Activated naive CD4-positive, alpha-beta T cell treated with anti-CD3 and anti-CD28 coated beads for 36 hours (primary cell): ENCODE measurements at regions of chr12 and their contacts with region 1.

Region 1: DNA sequence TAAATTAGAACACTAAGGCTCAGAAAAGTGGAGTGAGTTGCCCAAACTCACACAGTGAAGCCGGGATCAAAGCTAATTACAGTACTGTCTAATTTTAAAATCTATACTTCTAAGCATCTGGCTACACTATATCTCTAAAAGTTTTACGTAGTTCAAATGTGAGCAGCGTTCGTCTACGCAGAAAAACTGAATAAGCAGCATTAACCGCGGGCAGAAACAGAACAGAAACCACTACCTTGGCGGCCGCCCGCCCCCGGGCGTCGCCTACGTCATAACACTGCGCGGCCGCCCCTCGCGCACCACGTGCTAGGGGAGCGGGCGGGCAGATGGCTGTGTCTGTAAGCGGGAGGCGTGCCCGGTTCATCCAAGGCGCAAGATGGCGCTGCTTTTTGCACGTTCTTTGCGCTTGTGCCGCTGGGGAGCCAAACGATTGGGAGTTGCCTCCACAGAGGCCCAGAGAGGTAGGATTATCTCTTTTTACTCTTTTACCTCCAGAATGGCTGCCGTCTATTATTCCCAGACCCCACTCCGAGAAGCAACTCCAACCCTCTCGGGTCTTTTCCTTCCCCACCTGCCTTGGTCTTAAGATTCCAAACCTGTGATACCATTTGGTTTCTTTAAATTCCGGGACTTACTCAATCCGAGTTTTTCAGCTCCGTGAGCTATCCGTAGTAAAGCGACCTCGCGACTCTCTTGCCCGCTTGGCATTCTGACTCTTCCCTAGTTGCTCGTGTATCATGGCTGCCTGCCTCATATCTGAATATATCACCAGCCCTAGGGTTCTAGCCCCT is at the start of gene SPRYD4:
- DNase-seq: peak; percentile 95
- H3K4me3 Mint-ChIP-seq: peak within 1 kb of the TSS; percentile 96
- H3K27ac Mint-ChIP-seq: peak within 1 kb of the TSS; percentile 97
- H3K4me1 Mint-ChIP-seq: peaks cover 32% of the 10 kb centered on the region
- H3K27me3 Mint-ChIP-seq: no peaks in the 10 kb centered on the region
- total RNA-seq, gene SPRYD4: 2.2 TPM

Region 2: GRCh38 chr12:56127888-56128669 is 340.3 kb before region 1 on chr12 and contains the start of gene ESYT1:
- CTCF ChIA-PET with region 1: interaction called, 4 read pairs
- intact Hi-C with region 1: loop called (anchors 1 kb)
- DNase-seq: peak; percentile 99
- H3K4me3 Mint-ChIP-seq: peak within 1 kb of the TSS; percentile 91
- H3K27ac Mint-ChIP-seq: peak within 1 kb of the TSS; percentile 86
- H3K4me1 Mint-ChIP-seq: peaks cover 55% of the 10 kb centered on the region
- H3K27me3 Mint-ChIP-seq: no peaks in the 10 kb centered on the region
- total RNA-seq, gene ESYT1: 87.4 to 88.9 TPM

Region 3: DNA sequence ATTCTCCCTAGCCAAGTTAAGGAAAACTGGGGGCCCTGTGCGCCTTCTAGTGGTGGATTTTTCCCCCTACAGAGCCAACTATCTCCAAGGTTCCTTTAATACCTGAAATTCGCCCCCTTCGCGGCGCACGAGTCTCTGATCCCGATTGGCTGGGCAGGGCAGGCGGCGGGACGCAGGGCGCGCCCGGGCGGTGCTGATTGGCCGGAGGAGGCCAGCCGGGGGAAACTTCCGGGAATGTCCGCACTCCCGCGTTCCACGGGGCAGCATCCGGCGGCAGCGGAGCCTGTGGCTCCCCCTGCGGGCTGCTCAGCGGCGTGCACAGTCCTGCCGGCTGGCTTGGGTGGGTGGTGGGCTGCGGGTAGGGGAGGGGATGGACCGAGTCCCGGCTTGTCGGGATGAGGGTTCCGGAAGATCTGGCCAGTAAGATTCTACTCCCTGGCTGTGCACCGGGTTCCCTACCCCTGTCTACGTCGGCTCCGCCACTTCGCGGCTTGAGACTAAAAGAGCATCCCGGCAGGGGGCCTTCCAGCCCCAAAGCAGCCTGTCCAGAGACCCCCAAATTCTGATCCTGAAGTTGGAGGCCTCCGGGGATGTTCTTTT is 244.2 kb before region 1 on chr12 and contains the start of gene NABP2:
- CTCF ChIA-PET with region 1: interaction called, 14 read pairs
- intact Hi-C with region 1: loop called (anchors 1 kb)
- DNase-seq: peak; percentile 97
- H3K4me3 Mint-ChIP-seq: peak within 1 kb of the TSS; percentile 99
- H3K27ac Mint-ChIP-seq: peak within 1 kb of the TSS; percentile 93
- H3K4me1 Mint-ChIP-seq: peaks cover 37% of the 10 kb centered on the region
- H3K27me3 Mint-ChIP-seq: no peaks in the 10 kb centered on the region
- total RNA-seq, gene NABP2: 57.4 to 59.0 TPM

Region 4: DNA sequence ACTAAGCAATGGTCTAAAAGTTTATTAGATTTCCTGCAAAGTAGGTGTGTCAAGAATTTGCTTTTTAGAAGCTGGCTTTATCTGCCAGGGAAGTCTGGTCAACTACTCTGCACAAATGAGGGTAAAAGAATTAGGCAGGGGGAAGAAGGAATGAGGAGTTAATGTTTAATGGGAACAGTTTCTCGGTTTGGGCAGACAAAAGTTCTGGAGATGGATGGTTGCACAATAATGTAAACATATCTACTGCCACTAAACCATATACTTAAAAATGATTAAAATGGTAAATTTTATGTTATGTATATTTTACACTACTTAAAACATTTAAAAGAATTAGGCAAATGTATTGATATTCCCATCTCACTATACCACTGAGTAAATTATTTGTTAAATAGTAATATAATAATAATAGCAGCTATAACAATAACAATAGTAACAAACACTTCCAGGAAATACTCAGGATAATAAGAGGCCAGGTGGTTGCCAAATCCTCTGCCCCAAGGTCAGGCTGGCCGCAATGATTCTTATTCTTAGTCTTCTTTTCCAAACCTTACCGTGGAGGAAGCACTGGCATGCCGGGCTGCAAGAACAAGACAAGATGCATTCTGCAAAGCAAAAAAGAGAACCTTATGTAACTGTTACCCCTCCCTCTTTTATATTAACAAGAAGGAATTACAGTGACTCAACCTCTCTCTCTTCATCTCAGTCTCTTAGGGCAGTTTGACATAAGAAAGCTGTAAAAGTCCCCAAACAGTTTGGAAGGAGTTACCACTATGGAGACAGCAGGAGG is 182.2 kb before region 1 on chr12:
- CTCF ChIA-PET with region 1: interaction called, 8 read pairs
- intact Hi-C with region 1: loop called (anchors 1 kb)
- DNase-seq: no peak
- H3K4me3 Mint-ChIP-seq: no peak overlapping the region
- H3K27ac Mint-ChIP-seq: peak overlapping the region; percentile 44
- H3K4me1 Mint-ChIP-seq: peaks cover 14% of the 10 kb centered on the region
- H3K27me3 Mint-ChIP-seq: no peaks in the 10 kb centered on the region

Region 5: GRCh38 chr12:56333679-56334489 is 134.5 kb before region 1 on chr12 and contains the start of gene PAN2:
- CTCF ChIA-PET with region 1: interaction called, 9 read pairs
- intact Hi-C with region 1: loop called (anchors 1 kb)
- DNase-seq: peak; percentile 98
- H3K4me3 Mint-ChIP-seq: peak within 1 kb of the TSS; percentile 97
- H3K27ac Mint-ChIP-seq: peak within 1 kb of the TSS; percentile 100
- H3K4me1 Mint-ChIP-seq: peaks cover 44% of the 10 kb centered on the region
- H3K27me3 Mint-ChIP-seq: no peaks in the 10 kb centered on the region
- total RNA-seq, gene PAN2: 82.7 to 85.4 TPM

Region 6: GRCh38 chr12:56448860-56449621 is 19.4 kb before region 1 on chr12 and contains the start of gene TIMELESS:
- CTCF ChIA-PET with region 1: interaction called, 33 read pairs
- intact Hi-C with region 1: loop called (anchors 1 kb)
- DNase-seq: peak; percentile 90
- H3K4me3 Mint-ChIP-seq: peak within 1 kb of the TSS; percentile 89
- H3K27ac Mint-ChIP-seq: peak within 1 kb of the TSS; percentile 96
- H3K4me1 Mint-ChIP-seq: peaks cover 16% of the 10 kb centered on the region
- H3K27me3 Mint-ChIP-seq: no peaks in the 10 kb centered on the region
- total RNA-seq, gene TIMELESS: 69.9 to 70.8 TPM